ENCODE measurements at regions of chr9 and their contacts with region 1.

Region 1: DNA sequence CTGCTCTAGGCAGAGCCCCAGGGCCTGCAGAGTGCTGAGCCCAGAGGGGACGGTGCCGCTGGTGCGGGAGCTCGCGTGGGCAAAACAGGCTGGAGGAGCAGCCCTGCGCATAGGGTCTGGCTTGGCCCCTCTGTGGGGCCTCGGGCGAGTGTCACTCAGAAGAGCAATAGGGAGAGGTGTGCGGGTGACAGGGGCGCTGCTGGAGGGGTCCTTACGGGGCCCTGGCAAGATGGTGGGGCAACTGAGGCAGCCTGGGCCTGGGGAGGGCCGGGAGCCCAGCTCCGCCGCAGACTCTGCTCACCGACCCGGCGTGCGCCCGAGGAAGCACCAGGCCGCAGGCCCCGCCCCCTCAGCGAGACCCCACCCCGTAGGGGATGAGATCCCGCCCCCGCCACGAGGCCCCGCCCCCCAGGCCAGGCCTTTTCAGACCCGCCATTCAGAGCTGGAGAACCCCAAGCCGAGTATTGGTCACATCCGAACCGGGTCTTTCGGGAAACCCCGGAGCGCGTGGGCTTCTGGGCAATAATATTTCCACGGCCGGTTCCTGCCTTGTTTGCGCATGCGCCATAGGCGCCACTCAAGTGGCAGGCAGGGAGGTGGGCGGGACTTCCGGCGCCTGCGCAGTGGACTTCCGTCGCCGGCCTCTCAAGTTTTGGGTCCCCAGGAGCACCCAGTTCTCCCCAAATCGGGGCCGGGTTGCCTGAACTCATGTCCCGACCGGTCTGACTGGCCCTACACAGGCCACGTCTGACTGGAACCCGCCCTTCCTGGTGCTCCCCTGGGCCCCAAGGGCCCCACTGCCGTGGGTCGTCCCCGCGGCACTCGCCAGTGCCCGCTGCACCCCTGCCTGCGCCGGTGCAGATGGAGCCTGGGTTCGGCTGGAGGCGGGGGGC is 1.3 kb upstream of the RNF208 start:
- DNase-seq: peak; percentile 99
- H3K4me3 ChIP-seq: peak overlapping the region; percentile 72
- H3K27ac ChIP-seq: peak overlapping the region; percentile 87
- H3K4me1 ChIP-seq: peaks cover 9% of the 10 kb centered on the region
- H3K27me3 ChIP-seq: no peaks in the 10 kb centered on the region
- CTCF ChIP-seq: no peak

Region 2: GRCh38 chr9:136790927-136791641 is 432.2 kb before region 1 on chr9 and contains the start of gene TMEM141:
- CTCF ChIA-PET with region 1: no interaction called
- POLR2A ChIA-PET with region 1: no interaction called
- intact Hi-C with region 1: loop called (anchors 5 kb)
- DNase-seq: peak; percentile 100
- H3K4me3 ChIP-seq: peak within 1 kb of the TSS; percentile 96
- H3K27ac ChIP-seq: peak within 1 kb of the TSS; percentile 94
- H3K4me1 ChIP-seq: peaks cover 16% of the 10 kb centered on the region
- H3K27me3 ChIP-seq: no peaks in the 10 kb centered on the region
- CTCF ChIP-seq: no peak
- total RNA-seq, gene TMEM141: 32.7 and 39.5 TPM in 2 replicates

Region 3: DNA sequence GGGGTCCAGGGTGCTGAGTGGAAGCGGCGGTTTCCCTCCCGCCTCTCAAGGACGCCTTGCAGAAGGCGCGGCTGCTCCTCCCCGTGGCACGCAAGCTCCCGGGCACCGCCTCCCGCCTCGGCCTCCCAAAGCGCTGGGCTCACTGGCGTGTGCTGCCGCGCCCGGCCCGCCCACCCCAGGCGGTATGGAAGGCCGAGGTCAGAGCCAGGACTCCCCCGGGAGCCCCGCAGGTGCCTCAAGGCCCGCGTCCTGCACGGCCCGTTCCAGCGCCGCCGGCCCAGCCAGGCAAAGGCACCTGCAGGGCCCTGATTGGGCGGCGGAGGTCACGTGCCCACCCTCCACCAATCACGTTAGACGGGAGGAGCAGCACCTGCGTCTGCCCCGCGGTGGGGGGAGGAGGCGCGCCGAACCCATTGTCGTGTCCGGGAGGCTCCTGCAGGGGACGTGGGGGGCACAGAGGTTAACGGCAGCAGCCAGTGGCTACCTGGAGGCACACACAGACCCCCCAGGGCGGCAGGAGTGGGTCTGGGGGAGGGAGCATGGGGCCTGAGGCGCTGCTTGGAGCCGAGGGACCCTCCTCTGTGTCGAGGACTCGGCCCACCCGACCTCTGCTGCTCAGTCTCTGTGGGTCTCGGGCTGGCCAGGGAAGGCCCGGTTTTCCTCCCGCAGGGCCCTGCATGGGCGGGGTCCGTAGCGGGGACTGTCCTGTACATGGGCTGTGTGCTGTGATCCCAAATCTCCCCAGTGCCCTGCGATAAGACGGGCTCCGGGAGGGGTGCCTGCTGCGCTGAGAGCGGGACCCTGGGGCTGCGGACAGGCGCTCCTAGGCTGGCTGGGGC is 273.3 kb before region 1 on chr9:
- CTCF ChIA-PET with region 1: no interaction called
- POLR2A ChIA-PET with region 1: no interaction called
- intact Hi-C with region 1: no loop called
- DNase-seq: peak; percentile 94
- H3K4me3 ChIP-seq: peak overlapping the region; percentile 63
- H3K27ac ChIP-seq: peak overlapping the region; percentile 84
- H3K4me1 ChIP-seq: no peaks in the 10 kb centered on the region
- H3K27me3 ChIP-seq: no peaks in the 10 kb centered on the region
- CTCF ChIP-seq: no peak

Region 4: GRCh38 chr9:137114610-137115391 is 108.5 kb before region 1 on chr9 and contains the start of gene DPP7:
- CTCF ChIA-PET with region 1: interaction called, 6 read pairs
- POLR2A ChIA-PET with region 1: no interaction called
- intact Hi-C with region 1: loop called (anchors 1 kb)
- DNase-seq: peak; percentile 68
- H3K4me3 ChIP-seq: peak within 1 kb of the TSS; percentile 63
- H3K27ac ChIP-seq: peak within 1 kb of the TSS; percentile 67
- H3K4me1 ChIP-seq: peaks cover 7% of the 10 kb centered on the region
- H3K27me3 ChIP-seq: no peaks in the 10 kb centered on the region
- CTCF ChIP-seq: no peak
- total RNA-seq, gene DPP7: 120 and 122 TPM in 2 replicates

Region 5: GRCh38 chr9:137129456-137130175 is 93.7 kb before region 1 on chr9:
- CTCF ChIA-PET with region 1: interaction called, 12 read pairs
- POLR2A ChIA-PET with region 1: no interaction called
- intact Hi-C with region 1: no loop called
- DNase-seq: peak; percentile 96
- H3K4me3 ChIP-seq: peak overlapping the region; percentile 79
- H3K27ac ChIP-seq: peak overlapping the region; percentile 76
- H3K4me1 ChIP-seq: peaks cover 13% of the 10 kb centered on the region
- H3K27me3 ChIP-seq: peaks cover 17% of the 10 kb centered on the region
- CTCF ChIP-seq: no peak

Measured in A673 (cell line).